Esophagus muscularis mucosa (tissue), 4 donors: ENCODE measurements at regions of chr7 and their contacts with region 1.

Region 1: DNA sequence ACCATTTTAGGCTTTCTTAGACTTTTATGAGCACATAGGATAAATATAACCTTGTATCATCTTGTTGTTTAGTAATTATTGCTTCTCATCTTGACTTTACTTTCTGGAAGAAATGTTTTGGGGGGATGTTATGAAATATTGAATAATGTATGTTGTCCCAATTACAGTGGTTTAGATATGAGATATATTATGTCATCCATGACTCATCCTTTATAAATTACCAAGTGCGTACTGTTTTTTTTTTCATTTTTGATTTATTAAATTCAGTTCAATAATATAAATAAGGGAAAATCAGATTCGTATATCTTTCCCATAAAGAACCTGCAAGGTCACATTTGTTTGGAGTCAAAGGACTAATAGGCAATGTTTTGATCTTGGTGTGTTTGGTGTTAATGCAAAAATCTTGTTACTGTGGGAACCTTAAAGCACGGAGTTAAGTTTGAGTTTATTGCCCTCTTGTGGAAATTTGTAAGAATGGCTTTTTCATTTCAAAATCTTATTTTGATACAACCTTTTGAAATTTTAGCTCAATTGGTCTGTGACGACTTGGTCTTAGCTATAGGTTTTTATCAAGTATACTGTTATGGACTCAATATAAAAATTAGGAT is 108.6 kb downstream of the SRI start:
- DNase-seq: no peak
- H3K4me3 ChIP-seq: no peak overlapping the region
- H3K27ac ChIP-seq: no peak overlapping the region
- H3K4me1 ChIP-seq: no peaks in the 10 kb centered on the region
- H3K27me3 ChIP-seq: no peaks in the 10 kb centered on the region
- CTCF ChIP-seq: peak; percentile 37 to 52 (median 44)
- EP300 ChIP-seq: no peak
- POLR2A ChIP-seq: no peak

Region 2: DNA sequence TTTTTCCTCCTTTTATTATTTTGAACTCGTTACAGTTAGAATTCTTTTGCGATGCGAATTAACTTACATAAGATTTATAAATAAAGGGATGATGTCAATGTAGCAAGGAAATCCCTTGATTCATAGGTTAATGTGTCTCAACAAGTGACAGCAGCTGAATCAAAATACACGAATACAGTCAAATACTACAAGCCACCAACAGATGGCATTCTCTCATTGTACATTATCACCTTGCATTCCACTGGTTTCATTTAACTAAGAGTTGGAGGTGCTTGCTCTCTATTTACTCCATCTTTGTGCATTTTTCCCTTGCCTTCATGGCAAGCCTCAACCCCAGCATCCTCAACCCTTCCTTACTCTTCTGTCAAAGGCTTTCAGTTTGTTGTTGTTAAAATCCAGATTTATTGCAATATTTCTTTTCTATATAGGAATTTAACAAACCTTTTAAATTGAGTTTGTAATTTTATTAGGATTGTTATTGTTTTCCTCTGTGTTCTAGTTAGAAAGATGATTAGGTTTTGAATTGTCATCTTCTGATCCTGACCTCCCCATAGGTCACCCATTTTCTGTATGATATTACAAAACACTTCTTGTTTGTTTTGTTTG is 313.3 kb before region 1 on chr7:
- intact Hi-C with region 1: loop called (anchors 10 kb)
- DNase-seq: no peak
- H3K4me3 ChIP-seq: no peak overlapping the region
- H3K27ac ChIP-seq: no peak overlapping the region
- H3K4me1 ChIP-seq: no peaks in the 10 kb centered on the region
- H3K27me3 ChIP-seq: no peaks in the 10 kb centered on the region
- CTCF ChIP-seq: peak; percentile 25 to 50 (median 40)
- EP300 ChIP-seq: no peak
- POLR2A ChIP-seq: no peak